IMR-90 (cell line): ENCODE measurements at regions of chr22 and their contacts with region 1.

Region 1: DNA sequence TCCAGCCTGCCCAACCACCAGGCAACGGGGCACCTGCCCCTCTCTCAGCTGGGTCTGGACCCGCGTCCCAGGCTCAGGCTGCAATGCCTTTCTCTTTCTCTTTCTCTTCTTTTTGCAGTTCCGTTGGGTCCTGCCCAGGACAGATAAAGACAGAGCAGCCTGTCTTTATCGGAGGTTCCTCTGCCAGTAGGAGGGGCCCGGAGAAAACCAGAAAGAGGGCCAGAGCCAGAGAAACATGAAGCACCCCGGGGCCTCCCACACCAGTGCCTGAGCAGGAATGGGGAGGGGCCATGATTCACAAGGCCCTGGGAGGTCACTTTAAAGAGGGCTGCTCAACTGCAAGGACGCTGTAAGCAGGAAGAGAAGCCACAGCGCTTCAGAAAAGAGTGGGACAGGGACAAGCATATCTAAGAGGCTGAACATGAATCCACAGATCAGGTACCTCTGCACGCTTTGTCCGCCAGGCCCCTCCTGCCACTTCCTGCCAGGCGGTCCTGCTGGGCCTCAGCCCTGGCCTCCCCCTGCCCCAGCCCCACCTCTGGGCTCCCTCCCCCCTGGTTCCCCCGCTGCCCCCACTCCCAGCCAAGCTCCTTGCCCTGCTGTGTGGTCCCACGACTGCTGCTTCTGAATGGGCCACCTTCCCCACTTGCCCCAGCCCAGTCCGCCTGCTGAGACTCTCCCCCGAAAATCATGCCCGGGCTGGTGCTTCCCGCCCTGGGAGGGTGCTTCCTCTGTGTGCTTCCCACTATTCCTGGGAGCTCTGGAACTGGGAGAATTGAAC is at the start of gene APOBEC3C:
- DNase-seq: peak; percentile 90
- ATAC-seq: peak; percentile 99
- H3K4me3 ChIP-seq: peak within 1 kb of the TSS; percentile 81
- H3K27ac ChIP-seq: peak within 1 kb of the TSS; percentile 92
- H3K4me1 ChIP-seq: peaks cover 5% of the 10 kb centered on the region
- H3K27me3 ChIP-seq: no peaks in the 10 kb centered on the region
- CTCF ChIP-seq: peak; percentile 29; the same call in 1 of the 2 replicates
- POLR2A ChIP-seq: peak; percentile 65; the same call in 1 of the 2 replicates
- RAD21 ChIP-seq: no peak
- total RNA-seq, gene APOBEC3C: 5.6 and 6.6 TPM in 2 replicates

Region 2: DNA sequence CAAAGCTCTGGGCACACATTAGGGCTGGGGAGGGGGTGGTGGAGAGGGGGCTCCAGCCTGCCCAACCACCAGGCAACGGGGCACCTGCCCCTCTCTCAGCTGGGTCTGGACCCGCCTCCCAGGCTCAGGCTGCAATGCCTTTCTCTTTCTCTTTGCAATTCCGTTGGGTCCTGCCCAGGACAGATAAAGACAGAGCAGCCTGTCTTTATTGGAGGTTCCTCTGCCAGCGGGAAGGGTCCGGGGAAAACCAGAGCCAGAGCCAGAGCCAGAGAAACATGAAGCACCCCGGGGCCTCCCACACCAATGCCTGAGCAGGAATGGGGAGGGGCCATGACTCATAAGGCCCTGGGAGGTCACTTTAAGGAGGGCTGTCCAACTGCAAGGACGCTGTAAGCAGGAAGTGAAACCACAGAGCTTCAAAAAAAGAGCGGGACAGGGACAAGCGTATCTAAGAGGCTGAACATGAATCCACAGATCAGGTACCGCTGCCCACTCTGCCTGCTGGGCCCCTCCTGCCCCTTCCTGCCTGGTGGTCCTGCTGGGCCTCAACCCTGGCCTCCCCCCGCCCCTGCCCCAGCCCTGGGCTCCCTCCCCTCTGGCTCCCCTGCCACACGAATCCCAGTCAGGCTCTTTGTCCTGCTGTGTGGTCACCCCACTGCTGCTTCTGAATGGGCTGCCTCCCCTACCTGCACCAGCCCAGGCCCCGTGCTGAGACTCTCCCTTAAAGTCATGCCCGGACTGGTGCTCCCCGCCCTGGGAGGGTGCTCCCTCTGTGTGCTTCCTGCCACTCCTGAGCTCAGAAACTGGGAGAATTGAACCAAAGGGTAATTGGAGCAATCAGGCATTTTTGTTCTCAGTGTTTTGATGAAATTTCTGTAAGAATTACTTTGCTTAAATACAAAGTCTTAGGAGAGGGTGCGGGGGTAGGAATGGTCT is 31.9 kb before region 1 on chr22 and contains the start of gene APOBEC3B:
- CTCF ChIA-PET with region 1: no interaction called
- POLR2A ChIA-PET with region 1: no interaction called
- dilution Hi-C with region 1: no loop called
- in situ Hi-C with region 1: no loop called
- intact Hi-C with region 1: no loop called
- DNase-seq: peak; percentile 95
- ATAC-seq: peak; percentile 100
- H3K4me3 ChIP-seq: peak within 1 kb of the TSS; percentile 22
- H3K27ac ChIP-seq: peak within 1 kb of the TSS; percentile 43; the same call in 1 of the 2 replicates
- H3K4me1 ChIP-seq: peaks cover 8% of the 10 kb centered on the region
- H3K27me3 ChIP-seq: no peaks in the 10 kb centered on the region
- CTCF ChIP-seq: no peak
- POLR2A ChIP-seq: peak; percentile 31; the same call in 1 of the 2 replicates
- RAD21 ChIP-seq: no peak
- total RNA-seq, gene APOBEC3B: 17.2 and 17.6 TPM in 2 replicates

Region 3: GRCh38 chr22:39080052-39080762 is 66.1 kb after region 1 on chr22:
- CTCF ChIA-PET with region 1: interaction called, 3 read pairs
- POLR2A ChIA-PET with region 1: interaction called, 13 read pairs
- dilution Hi-C with region 1: no loop called
- in situ Hi-C with region 1: no loop called
- intact Hi-C with region 1: no loop called
- DNase-seq: no peak
- ATAC-seq: no peak
- H3K4me3 ChIP-seq: no peak overlapping the region
- H3K27ac ChIP-seq: no peak overlapping the region
- H3K4me1 ChIP-seq: peaks cover 4% of the 10 kb centered on the region
- H3K27me3 ChIP-seq: peaks cover 1% of the 10 kb centered on the region; the same call in 1 of the 2 replicates
- CTCF ChIP-seq: no peak
- POLR2A ChIP-seq: no peak
- RAD21 ChIP-seq: no peak

Region 4: DNA sequence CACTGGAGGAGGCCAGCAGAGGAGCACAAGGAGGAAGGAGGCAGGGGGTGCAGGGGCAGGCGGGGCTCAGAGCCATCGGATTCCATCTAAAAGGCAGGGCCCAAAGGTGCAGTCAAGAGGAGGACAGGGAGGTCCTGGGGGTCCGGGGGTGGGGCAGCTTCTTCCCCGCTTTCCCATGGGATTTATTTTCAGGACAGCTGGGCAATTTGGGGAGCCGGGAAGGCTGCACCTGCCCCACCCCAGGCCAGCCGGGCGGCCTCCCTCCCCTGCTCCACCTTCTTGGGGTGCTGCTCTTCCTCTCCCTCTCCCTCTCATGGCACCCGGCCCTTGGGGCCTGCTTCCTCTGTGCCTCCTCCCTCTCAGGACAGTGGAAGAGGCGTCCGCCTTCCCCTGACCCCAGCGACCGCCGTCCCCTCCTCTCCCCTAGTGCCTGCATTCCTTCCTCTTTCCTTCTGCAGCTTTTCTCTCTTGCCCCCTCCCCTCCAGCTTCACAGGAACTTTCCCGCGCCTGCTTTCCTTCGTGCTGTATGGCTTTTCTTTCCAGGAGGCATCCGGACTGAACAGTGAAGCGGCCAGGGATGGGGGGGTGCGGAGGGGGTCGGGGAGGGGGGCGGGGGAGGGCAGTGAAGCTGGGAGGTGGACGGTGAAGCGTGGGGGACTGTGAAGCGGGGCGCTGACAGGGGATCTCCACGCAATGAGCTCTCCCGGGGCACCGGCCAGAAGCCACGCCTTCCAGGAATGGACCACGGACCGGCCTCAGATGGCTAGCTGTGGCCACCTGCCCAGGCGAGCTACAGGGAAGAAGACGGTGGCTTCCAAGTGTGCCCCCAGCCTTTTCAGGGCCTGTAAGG is 109.8 kb after region 1 on chr22:
- CTCF ChIA-PET with region 1: no interaction called
- POLR2A ChIA-PET with region 1: no interaction called
- dilution Hi-C with region 1: no loop called
- in situ Hi-C with region 1: loop called (anchors 5 kb)
- intact Hi-C with region 1: no loop called
- DNase-seq: no peak
- ATAC-seq: no peak; the same call in 1 of the 2 replicates
- H3K4me3 ChIP-seq: no peak overlapping the region
- H3K27ac ChIP-seq: no peak overlapping the region
- H3K4me1 ChIP-seq: no peaks in the 10 kb centered on the region
- H3K27me3 ChIP-seq: peaks cover 6% of the 10 kb centered on the region; the same call in 1 of the 2 replicates
- CTCF ChIP-seq: no peak
- POLR2A ChIP-seq: no peak
- RAD21 ChIP-seq: no peak